AG04449 (cell line): ENCODE measurements at regions of chr1 and their contacts with region 1.

Region 1: GRCh38 chr1:55685560-55685959 is 470.4 kb upstream of the USP24 start:
- DNase-seq: no peak
- H3K4me3 ChIP-seq: no peak overlapping the region
- CTCF ChIP-seq: no peak

Region 2: DNA sequence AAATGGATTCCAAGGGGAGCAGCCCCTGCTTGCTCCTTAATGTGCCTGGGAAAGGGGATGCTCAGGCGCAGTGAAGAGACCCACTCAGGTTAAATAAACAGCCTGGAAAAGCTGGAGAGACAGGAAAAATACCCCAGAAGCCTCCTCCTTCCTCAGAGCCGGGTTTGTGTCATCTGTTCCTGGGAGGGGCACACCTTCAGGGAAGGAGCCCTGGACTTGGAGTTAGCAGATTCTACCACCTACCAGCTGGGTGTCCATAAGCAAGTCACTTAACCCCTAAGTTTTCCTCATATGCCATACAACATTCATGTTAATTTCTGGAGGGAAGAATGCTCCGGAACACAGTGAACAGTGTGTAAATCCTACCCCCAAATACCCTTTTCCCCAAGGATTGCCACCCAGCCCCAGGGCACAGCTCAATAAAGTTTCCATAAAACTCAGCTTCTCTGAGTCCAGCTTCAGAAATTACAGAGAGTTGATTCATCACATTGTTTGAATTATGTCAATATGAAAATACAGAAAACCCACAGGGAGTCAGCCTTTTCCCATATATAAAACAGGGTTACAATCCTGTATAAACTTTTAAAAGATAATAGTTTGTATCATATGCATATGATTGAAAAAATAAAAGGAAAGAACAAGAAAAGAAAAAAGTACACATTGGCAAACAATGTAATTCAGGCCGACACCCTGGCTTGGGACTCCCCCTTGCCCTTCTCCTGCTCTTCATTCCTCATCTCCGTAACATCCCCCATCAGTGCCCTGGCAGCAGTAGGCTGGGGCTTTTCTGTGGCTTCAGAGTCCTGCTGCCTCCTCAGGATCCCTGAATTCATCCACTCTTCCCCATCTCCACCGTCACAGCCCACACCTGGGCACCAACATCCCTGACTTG is 178.6 kb before region 1 on chr1:
- CTCF ChIA-PET with region 1: no interaction called
- POLR2A ChIA-PET with region 1: no interaction called
- DNase-seq: no peak
- H3K4me3 ChIP-seq: no peak overlapping the region
- CTCF ChIP-seq: no peak

Region 3: GRCh38 chr1:55696181-55696754 is 10.7 kb after region 1 on chr1:
- CTCF ChIA-PET with region 1: interaction called, 14 read pairs
- POLR2A ChIA-PET with region 1: no interaction called
- DNase-seq: peak; percentile 92
- H3K4me3 ChIP-seq: no peak overlapping the region
- CTCF ChIP-seq: no peak

Region 4: DNA sequence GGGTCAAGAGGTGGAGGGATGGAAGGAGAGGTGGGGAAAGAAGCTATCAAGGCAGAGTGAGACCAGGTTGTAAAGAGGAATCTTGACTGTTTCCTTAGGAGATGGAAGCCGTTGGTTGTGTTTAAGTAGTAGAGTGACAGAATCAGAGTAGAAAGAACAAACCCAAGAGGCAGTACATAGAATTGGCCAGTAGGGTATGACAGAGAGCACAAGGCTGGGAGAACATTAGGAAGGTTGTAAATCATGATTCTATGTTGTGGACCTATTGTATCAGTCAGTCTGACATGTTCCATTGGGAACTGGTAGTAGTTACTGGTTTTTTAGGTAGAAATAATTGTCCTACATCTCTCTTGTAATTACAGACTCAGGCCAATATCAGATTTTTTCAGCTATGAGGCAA is 16.5 kb after region 1 on chr1:
- CTCF ChIA-PET with region 1: interaction called, 14 read pairs
- POLR2A ChIA-PET with region 1: no interaction called
- DNase-seq: no peak
- H3K4me3 ChIP-seq: no peak overlapping the region
- CTCF ChIP-seq: peak; percentile 27